ENCODE measurements at regions of chr12 and their contacts with region 1.

Region 1: GRCh38 chr12:74415633-74416032 is 122.0 kb upstream of the ATXN7L3B start:
- DNase-seq: peak; percentile 23
- H3K4me3 Mint-ChIP-seq: no peak overlapping the region
- H3K27ac Mint-ChIP-seq: no peak overlapping the region
- H3K4me1 Mint-ChIP-seq: peaks cover 9% of the 10 kb centered on the region
- H3K27me3 Mint-ChIP-seq: no peaks in the 10 kb centered on the region
- CTCF ChIP-seq: no peak

Region 2: DNA sequence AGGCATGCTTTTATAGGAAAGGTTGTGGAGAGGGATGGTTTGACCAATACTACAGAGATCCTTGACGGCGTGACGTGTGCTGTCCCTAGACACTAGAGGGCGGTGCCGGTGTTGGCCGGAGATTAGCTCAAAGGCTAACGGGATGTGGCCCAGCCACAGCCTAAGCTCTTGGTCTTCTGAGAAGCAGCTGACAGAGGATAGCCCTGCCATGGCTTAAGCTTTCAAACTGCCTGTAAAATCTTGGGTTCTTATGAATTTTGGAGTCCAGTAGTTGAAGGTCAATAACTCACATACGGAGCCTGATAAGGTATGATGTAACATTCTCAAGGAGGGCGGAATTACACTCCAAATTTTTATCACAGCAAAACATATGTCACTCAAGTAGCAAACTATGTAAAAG is 393.7 kb before region 1 on chr12:
- CTCF ChIA-PET with region 1: interaction called, 10 read pairs
- intact Hi-C with region 1: loop called (anchors 2 kb)
- DNase-seq: peak; percentile 85
- H3K4me3 Mint-ChIP-seq: no peak overlapping the region
- H3K27ac Mint-ChIP-seq: no peak overlapping the region
- H3K4me1 Mint-ChIP-seq: peaks cover 10% of the 10 kb centered on the region
- H3K27me3 Mint-ChIP-seq: no peaks in the 10 kb centered on the region
- CTCF ChIP-seq: peak; percentile 64

Region 3: DNA sequence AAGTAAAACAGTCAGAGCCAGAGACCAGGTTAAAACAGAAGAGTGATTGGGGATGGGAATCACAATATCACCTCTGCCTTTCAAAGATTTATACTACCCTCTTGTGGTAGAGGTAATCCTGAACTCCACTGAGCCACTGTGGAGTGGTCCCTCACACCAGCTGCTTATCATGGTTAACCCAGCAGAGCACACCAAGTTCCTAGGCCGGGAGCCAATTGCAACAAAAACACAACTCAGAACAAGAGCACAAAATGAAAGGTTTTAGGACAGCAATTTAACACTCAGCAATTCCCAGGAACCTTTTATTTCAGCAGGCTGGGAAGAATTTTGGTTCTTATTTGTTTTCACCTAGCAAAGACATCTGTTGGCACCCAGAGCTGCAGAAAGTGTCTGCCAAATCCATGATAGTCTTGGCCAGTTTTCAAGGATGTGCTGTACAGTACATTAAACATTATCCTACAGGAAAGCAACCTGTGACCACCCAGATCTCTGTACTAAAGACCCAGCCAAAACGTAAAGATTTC is 98.5 kb before region 1 on chr12:
- CTCF ChIA-PET with region 1: interaction called, 10 read pairs
- intact Hi-C with region 1: loop called (anchors 1 kb)
- DNase-seq: peak; percentile 52
- H3K4me3 Mint-ChIP-seq: no peak overlapping the region
- H3K27ac Mint-ChIP-seq: no peak overlapping the region
- H3K4me1 Mint-ChIP-seq: peaks cover 17% of the 10 kb centered on the region
- H3K27me3 Mint-ChIP-seq: no peaks in the 10 kb centered on the region
- CTCF ChIP-seq: peak; percentile 51

Region 4: DNA sequence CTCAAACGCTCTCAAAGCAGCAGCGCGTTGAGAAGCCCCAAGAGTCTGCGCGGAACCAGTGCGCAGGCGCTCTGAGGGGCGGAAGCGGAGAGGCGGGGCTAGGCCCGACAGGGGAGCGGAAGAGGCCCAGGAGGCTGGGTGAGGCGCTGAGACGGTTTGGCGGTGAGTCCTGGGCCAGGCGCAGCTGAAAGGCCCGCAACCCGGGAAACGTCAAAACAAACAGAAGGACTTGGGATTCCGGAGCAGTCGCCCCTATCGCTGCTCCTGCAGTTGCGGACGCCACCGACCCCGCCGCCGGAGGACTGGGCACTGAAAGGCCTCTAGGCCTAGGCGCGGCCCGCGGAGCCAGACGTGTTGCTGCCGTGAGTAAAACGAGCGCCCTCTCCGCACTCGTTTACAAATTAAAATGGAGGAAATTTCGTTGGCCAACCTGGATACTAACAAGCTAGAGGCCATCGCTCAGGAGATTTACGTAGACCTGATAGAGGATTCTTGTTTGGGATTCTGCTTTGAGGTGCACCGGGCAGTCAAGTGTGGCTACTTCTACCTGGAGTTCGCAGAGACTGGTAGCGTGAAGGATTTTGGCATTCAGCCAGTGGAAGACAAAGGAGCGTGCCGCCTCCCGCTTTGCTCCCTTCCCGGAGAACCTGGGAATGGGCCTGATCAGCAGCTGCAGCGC is 122.2 kb after region 1 on chr12 and contains the start of gene ATXN7L3B:
- CTCF ChIA-PET with region 1: interaction called, 3 read pairs
- intact Hi-C with region 1: loop called (anchors 2 kb)
- DNase-seq: peak; percentile 98
- H3K4me3 Mint-ChIP-seq: peak within 1 kb of the TSS; percentile 99
- H3K27ac Mint-ChIP-seq: peak within 1 kb of the TSS; percentile 100
- H3K4me1 Mint-ChIP-seq: peaks cover 22% of the 10 kb centered on the region
- H3K27me3 Mint-ChIP-seq: no peaks in the 10 kb centered on the region
- CTCF ChIP-seq: no peak
- total RNA-seq, gene ATXN7L3B: 50.6 and 59.7 TPM in 2 replicates